ENCODE measurements at regions of chr5 and their contacts with region 1.

Region 1: DNA sequence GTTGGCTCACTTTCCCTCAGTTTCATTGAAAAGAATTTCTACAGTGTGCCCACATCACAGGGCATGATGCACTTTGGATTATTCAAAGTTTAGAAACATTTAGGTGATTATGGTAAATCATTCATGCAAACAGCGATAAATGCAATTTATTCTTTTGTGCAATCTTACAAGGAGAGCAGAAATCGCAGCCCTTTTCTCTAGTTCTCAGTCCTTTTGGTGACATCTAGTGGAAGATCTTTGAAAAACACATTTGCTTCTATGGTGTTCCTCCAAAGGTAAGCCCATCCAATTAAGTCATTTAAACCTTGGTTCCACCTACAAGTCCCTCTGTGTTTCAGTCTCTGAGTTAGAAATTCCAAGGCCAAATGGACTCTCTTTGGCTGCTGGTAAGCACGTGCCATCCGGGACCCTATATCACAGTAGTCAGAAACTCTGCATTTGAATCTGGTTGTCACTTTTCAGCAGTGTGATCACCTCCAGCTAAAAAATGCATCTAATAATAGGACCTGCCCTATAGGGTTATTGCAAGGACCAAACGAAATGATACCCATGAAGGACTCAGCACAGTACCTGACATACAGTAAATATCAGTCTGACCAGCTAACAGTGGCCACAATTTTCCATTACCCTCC is 66.4 kb downstream of the MACROH2A1 start:
- DNase-seq: no peak
- ATAC-seq: no peak

Region 2: DNA sequence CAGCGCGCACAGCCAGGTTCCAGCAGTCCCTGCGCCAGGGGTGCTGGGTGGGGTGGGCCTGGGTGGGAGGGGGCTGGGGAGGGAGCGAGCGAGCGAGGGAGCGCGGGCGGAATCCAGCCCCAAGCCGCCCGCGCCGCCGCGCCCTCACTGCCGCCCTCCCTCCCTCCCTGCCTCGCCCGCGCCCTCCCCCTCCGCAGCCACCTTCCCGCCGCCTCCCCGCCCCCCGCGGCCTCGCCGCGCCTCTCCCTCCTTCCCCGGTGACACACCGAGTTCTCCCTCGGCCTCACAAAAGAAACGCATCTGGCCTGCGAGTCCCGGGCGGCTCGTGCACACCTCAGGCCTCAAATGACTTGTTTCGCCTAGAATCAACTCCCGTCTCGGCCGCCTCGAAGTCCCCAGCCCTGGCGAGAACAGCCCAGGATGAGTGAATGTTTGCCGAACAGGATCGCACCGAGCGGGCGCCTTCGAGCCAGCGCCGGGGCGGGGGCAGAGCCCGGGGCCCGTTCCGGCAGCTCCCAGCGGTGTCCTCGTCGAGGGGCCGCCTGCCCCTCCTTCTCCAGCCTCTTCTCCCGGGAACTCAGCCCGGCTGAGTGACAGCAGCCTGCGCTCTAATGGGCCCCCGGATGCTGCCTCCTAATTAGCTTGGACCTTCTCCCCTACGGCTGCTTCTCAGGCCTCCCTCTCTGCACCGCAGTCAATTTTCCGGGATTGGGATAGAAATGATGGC is 298.2 kb before region 1 on chr5:
- intact Hi-C with region 1: loop called (anchors 10 kb)
- DNase-seq: no peak
- ATAC-seq: no peak

Region 3: DNA sequence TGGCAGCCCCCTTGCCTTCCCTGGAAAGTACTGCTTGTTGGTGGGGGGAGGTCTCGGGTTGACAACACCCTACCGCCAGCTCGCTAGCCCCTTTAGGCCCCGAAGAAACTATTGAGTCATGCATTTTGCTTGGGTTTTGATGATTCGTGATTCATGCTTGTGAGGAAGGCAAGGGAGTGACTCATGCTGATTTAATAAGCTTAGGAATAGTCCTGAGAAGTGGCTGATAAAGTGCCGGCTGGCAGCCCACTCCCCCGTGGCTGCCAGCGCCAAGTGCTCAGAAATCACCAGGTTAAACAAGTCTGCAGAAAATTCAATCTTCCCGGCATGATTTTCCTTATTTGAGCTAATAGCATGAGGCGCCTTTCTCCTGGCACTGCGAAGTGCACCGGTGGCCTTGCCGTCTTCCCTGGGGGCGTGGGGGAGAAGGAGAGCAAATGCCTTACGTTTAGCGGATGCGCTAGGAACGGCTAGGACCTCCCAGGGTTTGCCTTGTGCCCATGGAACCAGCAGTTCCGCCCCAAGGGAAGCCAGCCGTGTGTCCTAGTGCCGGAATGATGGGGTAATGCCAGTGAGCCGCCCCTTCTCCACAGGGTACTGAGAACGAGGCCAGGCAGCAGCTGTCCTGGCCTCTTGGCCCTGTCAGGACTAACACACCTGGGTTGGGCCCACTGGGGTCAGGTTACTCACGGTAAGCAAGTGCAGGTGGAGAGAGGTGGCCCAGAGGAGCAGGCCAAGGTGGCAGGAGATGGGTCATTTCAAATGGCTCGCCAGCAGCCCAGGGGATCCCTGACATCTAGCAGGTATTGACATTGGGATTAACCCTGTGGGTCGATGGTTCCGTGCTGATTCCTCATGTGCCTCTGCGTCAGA is 85.5 kb before region 1 on chr5:
- intact Hi-C with region 1: loop called (anchors 5 kb)
- DNase-seq: no peak
- ATAC-seq: no peak